Body of pancreas (tissue), 4 donors: ENCODE measurements at regions of chr17 and their contacts with region 1.

Region 1: DNA sequence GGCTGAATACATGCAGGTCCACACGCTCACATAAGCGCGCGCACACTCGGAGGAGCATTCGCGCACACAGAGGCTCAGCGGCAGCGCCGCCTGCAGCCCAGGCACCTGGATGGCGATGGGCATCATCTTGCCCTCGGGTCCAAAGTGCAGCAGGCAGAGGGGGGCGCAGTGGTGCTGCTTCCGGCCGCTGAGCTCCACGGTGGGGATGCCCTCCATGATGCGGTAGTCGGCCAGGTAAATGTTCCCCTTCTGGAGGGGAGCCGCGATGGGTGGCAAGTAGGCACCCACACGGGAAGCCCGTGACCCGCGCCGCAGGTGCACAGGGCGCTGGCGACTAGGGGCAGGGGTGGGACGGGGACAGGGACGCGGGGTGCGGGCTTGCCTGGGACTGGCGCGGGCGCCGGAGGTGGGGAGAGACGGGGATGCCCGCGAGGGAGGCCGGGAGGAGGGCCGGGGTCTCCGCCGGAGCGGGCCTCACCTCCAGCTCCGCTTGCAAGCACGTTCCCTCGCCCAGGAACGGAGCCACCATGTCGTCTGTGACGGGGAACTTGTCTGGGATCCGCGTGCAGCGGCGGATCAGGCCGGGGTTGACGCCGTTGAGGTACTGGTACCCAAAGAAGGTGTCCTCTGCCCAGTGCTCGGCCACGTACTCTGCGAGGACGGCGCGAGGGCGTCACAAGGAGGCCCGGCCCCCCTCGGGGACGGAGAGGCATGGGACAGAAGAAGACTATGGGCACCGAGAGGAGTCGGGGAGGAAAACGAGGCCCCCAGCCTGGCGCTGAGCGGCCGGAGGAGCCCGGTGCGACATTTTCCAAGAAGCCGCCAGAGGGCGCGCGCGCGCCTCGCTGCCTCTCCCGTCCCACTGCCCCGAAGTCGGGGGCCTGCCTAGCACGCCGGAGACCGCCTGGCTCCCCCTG is 8.0 kb downstream of the ALOX12B start:
- DNase-seq: peak; percentile 61 to 75 (median 70)
- ATAC-seq: peak; percentile 87
- H3K4me3 ChIP-seq: no peak overlapping the region
- H3K27ac ChIP-seq: no peak overlapping the region
- H3K4me1 ChIP-seq: peaks cover 14% of the 10 kb centered on the region
- H3K27me3 ChIP-seq: peaks cover 0 to 25% of the 10 kb centered on the region in 2 donors
- CTCF ChIP-seq: peak; percentile 67 to 90 (median 79)
- POLR2A ChIP-seq: no peak

Region 2: GRCh38 chr17:8300627-8301242 is 221.2 kb after region 1 on chr17:
- intact Hi-C with region 1: loop called (anchors 10 kb)
- DNase-seq: peak; percentile 57 to 78 (median 68)
- ATAC-seq: peak; percentile 96
- H3K4me3 ChIP-seq: no peak overlapping the region
- H3K27ac ChIP-seq: no peak overlapping the region
- H3K4me1 ChIP-seq: peaks cover 7% of the 10 kb centered on the region
- H3K27me3 ChIP-seq: no peaks in the 10 kb centered on the region
- CTCF ChIP-seq: peak; percentile 73 to 93 (median 87)
- POLR2A ChIP-seq: no peak